ENCODE measurements at regions of chr1 and their contacts with region 1.

Region 1: DNA sequence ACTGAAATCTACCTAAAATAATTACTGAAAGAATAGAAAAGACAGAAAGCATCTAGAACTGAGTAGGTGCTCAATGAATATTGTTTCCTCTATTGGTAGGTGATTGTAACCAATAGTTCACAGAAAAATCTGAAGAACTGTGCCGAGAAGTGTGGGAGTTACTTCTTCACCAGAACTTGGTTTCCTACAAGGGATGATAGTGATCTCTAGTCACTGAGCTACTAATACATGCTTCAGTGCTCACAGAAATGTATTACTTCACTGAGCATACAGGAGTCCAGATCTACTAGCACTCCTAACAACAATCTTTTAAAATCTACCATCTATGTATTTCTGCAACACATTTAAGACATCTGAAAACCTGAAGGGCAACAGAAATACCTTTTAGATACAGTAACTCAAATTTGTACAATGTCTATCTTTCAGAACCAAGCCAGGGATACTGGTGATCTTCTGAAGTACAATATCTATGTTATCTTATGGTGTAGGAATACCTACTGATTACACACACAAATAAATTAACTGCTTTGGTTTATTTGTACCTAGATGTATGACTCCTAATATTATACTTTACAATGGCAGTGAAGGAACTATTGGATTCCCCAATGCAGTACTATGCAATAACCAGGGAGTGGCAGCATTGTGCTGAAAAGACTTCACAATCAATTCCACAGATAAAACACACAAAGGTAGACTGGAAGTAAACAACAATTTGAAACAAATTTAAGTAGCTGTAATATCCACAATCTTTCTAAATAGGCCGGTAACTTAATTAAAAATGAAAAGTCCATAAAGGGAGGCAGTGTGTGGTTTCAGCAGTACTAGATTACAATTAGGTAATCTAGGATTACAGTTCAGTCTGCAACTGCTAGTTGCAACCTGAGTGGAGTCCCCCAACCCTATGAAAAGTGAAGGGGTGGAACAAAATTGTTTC is 243.0 kb downstream of the SLC45A1 start:
- ATAC-seq: peak; percentile 48 to 67 (median 62)
- H3K4me3 ChIP-seq: no peak overlapping the region
- H3K27ac ChIP-seq: no peak overlapping the region
- H3K4me1 ChIP-seq: peaks cover 13 to 17% of the 10 kb centered on the region in 2 donors

Region 2: DNA sequence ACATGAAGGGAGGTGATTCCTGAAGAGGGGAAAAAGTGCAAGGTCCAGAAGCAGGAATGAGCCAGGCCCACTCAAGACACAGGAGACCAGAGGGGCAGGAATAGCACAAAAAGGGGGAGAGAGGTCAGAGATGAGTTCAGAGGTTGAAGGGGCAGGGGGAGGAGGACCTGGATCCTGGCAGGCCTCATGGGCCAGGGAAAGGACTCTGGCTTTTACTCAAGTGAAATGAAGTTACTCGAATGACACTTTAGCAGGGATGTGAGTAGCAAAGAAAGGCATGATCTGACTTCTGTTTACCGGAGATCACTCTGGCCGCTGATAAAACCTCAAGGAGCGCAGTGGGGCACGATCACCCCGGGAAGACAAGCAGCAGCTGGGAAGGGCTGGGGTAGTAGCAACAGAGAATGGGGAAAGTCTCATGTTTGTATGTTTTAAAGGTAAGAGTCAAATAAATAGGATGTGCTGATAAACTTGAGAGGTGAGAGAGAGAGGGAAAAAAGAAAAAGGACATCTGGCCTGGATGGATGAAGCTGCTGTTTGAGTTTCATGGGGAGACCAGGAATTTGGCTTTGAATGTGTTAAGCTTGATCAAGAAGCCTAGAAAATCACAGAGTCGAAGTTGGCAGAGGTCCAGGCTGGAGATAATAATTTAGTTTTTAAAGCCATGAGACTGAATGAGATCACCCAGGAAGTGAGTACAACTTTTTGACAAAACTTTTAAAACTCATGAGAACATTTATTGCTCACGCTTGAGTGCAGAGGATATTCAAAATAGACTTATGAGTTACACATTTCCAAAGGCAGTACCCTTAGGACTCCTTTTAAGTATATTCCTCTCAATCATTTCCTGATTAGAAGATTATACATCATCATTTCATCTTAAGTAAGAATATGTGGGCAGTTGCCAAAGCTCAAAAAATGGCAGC is 100.6 kb after region 1 on chr1:
- in situ Hi-C with region 1: no loop called
- ATAC-seq: peak in 3 of 8 experiments; percentile 12 to 41 (median 15)
- H3K4me3 ChIP-seq: no peak overlapping the region
- H3K27ac ChIP-seq: peak overlapping the region in 1 of 2 donors; percentile 52
- H3K4me1 ChIP-seq: peaks cover 44 to 56% of the 10 kb centered on the region in 2 donors

Region 3: DNA sequence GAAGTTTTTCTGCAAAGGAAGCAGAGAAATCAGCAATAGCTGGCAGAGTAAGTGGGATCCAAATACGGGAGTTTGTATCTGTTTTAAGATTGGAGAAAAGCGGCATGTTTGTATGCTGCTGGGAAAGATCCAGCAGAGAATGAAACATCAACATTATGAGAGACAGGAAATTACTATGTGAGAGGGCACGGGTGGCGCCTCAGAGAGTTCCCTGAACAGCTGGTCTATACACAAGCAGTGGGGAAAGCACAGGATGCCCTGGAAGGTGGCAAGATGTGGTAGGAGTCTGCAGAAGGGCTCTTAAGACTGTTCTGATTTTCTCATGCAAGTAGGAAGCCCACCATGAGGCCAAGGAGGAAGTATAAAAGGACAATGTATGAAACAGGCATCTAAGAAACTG is 126.2 kb after region 1 on chr1:
- in situ Hi-C with region 1: loop called in 1 of 9 experiments (anchors 25 kb)
- ATAC-seq: peak in 3 of 8 experiments; percentile 57 to 72 (median 63)
- H3K4me3 ChIP-seq: no peak overlapping the region
- H3K27ac ChIP-seq: no peak overlapping the region
- H3K4me1 ChIP-seq: peaks cover 6 to 29% of the 10 kb centered on the region in 2 donors

Region 4: GRCh38 chr1:8848663-8849386 is 287.9 kb after region 1 on chr1:
- in situ Hi-C with region 1: loop called in 4 of 9 experiments (anchors 25 kb)
- ATAC-seq: peak; percentile 63 to 99 (median 99)
- H3K4me3 ChIP-seq: no peak overlapping the region
- H3K27ac ChIP-seq: peak overlapping the region; percentile 5 to 22
- H3K4me1 ChIP-seq: peaks cover 12 to 13% of the 10 kb centered on the region in 2 donors